Activated naive CD4-positive, alpha-beta T cell treated with anti-CD3 and anti-CD28 coated beads for 36 hours (primary cell): ENCODE measurements at regions of chr1 and their contacts with region 1.

Region 1: DNA sequence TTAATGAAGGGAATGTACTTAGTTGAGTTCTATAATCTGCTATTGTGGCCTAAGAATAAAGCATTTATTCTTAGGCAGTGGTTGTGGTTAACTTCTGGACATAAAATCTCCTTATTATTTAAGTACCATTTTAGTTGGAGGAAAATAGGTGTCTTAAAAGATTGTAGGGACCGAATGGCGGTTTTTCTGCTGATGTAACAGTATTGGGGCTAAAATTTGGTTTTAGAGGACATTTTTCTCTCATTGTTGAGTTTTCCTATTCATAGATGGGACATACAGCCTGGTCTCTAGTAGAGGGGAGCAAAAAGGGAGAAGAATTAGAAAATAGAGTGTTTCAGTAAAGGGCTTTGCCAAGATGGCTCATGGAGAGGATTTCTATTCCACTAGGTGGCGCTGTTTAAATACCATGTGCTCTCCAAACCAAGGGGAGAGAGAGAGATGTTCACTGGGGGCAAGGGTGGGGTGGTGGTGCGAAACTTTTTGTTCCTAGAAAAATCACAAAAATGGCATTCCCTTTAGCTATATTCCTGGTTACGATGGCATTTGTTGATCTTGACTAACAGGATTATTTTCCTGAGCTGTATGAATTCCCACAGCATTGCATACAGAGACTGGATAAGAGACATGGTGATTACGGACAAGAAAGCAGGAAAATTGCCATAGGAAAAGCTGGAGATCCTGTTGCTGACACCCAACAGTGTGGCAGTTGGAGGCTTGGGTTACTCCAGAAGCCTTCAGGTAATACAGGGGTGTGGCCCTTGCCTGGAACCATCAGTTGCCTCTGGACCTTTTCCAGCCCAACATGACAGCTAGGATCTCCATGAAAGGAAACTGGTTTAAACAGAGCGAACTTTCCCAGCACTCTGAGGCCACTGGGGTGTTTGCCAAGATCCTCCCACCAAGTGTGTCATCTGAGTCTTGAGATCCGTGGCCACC is 18.2 kb upstream of the FCGR2A start:
- DNase-seq: peak; percentile 50
- H3K4me3 Mint-ChIP-seq: no peak overlapping the region
- H3K27ac Mint-ChIP-seq: no peak overlapping the region
- H3K4me1 Mint-ChIP-seq: peaks cover 10% of the 10 kb centered on the region
- H3K27me3 Mint-ChIP-seq: peaks cover 24% of the 10 kb centered on the region

Region 2: DNA sequence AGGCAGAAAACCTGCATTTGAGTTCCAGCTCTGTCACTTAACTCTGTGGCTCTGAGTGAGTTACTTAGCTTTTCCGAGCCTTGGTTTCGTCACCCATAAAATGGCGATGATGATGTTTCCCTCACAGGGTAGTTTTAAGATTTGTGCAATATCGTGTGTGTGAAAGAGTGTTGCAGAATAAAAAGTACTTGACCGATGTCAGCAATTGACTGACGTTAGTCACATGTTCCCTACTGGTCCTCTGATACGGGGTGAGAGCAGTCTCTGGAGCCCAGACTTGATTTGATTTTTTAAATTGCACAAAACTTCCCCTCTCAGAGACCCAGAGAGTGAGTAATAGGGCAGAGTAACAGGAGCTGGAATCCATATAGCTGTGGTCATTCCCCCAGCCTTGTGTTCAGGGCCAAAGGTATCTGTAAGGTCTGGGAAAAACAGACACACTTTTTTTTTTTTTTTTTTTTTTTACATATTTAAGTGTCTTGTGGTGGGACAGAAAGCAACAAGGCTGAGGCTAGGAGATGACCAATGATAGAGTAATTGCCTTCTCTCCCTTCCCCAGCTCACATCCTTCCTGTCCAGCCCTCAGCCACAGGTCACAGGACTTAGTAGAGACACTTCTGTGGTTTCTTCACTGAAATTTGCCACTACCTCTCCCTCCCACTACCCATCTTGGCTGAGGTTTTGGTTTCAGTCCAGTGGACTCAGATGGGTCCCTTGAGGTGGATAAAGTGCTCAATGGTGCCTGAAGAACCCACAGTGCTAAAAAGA is 269.9 kb before region 1 on chr1:
- CTCF ChIA-PET with region 1: no interaction called
- intact Hi-C with region 1: no loop called
- DNase-seq: no peak
- H3K4me3 Mint-ChIP-seq: no peak overlapping the region
- H3K27ac Mint-ChIP-seq: no peak overlapping the region
- H3K4me1 Mint-ChIP-seq: peaks cover 55% of the 10 kb centered on the region
- H3K27me3 Mint-ChIP-seq: no peaks in the 10 kb centered on the region

Region 3: DNA sequence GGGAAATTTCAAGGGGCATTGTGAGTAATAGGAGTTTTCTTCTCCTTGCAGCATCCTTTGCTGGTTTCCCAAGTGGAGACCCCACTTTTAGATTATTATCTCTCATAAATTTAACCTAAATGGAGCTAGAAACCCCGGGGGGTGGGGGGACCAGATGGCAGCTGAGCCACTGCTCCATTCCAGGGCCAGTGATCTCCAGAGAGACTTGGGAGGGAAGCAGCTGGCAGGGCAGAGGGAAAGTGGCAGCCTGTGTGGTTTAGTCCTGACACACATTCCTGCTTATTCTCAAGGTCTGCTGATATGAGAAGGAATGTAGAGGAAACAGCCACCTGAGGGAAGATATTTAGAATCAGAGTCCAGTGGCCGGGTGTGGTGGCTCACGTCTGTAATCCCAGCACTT is 212.2 kb before region 1 on chr1:
- CTCF ChIA-PET with region 1: no interaction called
- intact Hi-C with region 1: no loop called
- DNase-seq: no peak
- H3K4me3 Mint-ChIP-seq: no peak overlapping the region
- H3K27ac Mint-ChIP-seq: no peak overlapping the region
- H3K4me1 Mint-ChIP-seq: no peaks in the 10 kb centered on the region
- H3K27me3 Mint-ChIP-seq: peaks cover 2% of the 10 kb centered on the region

Region 4: GRCh38 chr1:161511018-161511755 is 24.1 kb after region 1 on chr1:
- CTCF ChIA-PET with region 1: interaction called, 11 read pairs
- intact Hi-C with region 1: no loop called
- DNase-seq: no peak
- H3K4me3 Mint-ChIP-seq: no peak overlapping the region
- H3K27ac Mint-ChIP-seq: no peak overlapping the region
- H3K4me1 Mint-ChIP-seq: peaks cover 9% of the 10 kb centered on the region
- H3K27me3 Mint-ChIP-seq: peaks cover 8% of the 10 kb centered on the region

Region 5: DNA sequence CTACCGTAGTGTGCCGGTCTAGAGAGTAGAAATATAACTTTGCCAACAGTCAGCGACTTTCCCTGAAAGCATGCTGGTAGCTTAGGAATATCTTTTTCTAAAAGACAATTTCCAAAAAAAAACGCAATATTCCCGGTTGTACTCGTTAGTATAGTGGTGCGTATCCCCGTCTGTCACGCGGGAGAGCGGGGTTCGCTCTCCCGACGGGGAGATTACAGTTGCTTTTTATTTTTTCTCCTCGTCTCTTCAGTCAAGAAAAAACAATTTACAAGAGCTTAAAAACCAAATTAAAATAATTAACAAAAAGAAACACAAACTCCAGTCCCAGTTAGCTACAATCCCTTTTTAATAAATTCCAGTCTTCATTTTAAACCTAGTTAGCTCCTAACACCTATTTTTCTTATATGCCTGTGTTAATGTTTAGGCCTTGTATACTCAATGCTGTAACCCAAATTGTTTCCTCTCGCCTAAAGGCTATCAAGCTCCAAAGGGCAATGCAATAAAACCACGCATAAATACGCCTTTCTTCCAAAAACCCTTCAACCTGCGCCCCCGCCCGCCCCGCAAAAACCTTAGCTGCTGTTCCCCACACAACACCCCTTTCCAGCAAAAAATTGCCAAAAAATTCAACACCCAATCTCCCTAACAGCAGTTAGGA is 45.0 kb after region 1 on chr1:
- CTCF ChIA-PET with region 1: interaction called, 4 read pairs
- intact Hi-C with region 1: loop called (anchors 2 kb)
- DNase-seq: no peak
- H3K4me3 Mint-ChIP-seq: no peak overlapping the region
- H3K27ac Mint-ChIP-seq: no peak overlapping the region
- H3K4me1 Mint-ChIP-seq: peaks cover 14% of the 10 kb centered on the region
- H3K27me3 Mint-ChIP-seq: peaks cover 3% of the 10 kb centered on the region

Region 6: DNA sequence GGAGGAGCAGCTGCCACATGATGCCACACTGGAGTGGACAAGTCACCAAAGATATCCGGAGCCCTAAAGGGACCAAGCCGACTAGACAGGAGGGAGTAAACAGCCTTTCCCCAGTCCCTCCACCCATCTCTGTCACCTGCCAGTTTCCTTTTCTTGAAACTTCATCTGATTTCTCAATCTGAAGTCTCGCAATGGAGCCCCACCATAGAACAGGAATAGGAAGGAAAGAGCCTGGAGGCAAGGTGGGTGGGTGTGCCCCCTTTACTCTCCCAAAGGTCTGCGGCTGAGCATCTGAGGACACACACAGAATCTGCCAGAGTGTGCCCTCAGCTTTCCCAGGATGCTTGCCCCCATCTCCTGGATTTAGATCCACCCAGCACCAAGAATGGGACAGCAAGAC is 144.0 kb after region 1 on chr1 and contains the start of gene FCGR3B:
- CTCF ChIA-PET with region 1: no interaction called
- intact Hi-C with region 1: loop called (anchors 10 kb)
- DNase-seq: no peak
- H3K4me3 Mint-ChIP-seq: no peak within 1 kb of the TSS
- H3K27ac Mint-ChIP-seq: no peak within 1 kb of the TSS
- H3K4me1 Mint-ChIP-seq: peaks cover 5% of the 10 kb centered on the region
- H3K27me3 Mint-ChIP-seq: no peaks in the 10 kb centered on the region
- total RNA-seq, gene FCGR3B: not detected

Region 7: GRCh38 chr1:161676958-161677689 is 190.1 kb after region 1 on chr1:
- CTCF ChIA-PET with region 1: no interaction called
- intact Hi-C with region 1: no loop called
- DNase-seq: no peak
- H3K4me3 Mint-ChIP-seq: no peak overlapping the region
- H3K27ac Mint-ChIP-seq: no peak overlapping the region
- H3K4me1 Mint-ChIP-seq: no peaks in the 10 kb centered on the region
- H3K27me3 Mint-ChIP-seq: peaks cover 3% of the 10 kb centered on the region

Region 8: GRCh38 chr1:161738627-161739287 is 251.7 kb after region 1 on chr1:
- CTCF ChIA-PET with region 1: interaction called, 62 read pairs
- intact Hi-C with region 1: loop called (anchors 1 kb)
- DNase-seq: peak; percentile 67
- H3K4me3 Mint-ChIP-seq: no peak overlapping the region
- H3K27ac Mint-ChIP-seq: no peak overlapping the region
- H3K4me1 Mint-ChIP-seq: peaks cover 19% of the 10 kb centered on the region
- H3K27me3 Mint-ChIP-seq: no peaks in the 10 kb centered on the region